Gastrocnemius medialis (tissue), 4 donors: ENCODE measurements at regions of chr7 and their contacts with region 1.

Region 1: DNA sequence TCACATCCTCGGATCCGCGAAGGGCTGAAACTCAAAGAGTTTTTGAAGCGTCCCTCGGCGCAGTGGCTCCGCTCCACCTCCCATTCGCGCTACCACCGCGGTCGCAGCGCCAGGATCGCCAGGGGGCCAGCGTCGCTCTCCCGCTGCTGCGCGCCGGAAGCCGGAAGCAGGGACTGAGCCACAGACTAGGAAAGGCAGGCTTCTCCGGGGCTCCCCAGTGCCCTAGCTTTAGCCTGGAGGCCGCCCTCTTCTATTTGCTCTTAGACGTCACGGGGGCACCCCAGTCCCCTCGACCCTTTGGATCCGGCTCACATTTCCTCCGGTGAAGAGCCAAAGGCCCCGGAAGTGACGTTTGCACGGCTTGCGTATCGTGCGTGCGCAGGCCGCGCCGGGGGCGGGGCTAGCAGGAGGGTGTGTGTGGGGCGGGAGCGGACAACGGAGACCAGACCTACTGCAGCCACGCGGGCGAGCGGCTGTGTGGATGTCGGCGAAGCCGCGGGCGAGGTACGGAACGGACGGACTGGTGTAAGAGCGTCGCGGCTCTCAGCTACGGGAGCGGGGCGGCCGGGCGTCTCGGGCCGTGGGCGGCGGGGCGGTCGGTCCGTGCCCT is 25.5 kb downstream of the KCTD7 start:
- DNase-seq: peak; percentile 95 to 97
- ATAC-seq: peak; percentile 97
- H3K4me3 ChIP-seq: peak overlapping the region; percentile 81 to 99 (median 87)
- H3K27ac ChIP-seq: peak overlapping the region; percentile 89 to 100 (median 99)
- H3K4me1 ChIP-seq: peaks cover 11 to 13% of the 10 kb centered on the region in 2 donors
- H3K27me3 ChIP-seq: no peaks in the 10 kb centered on the region
- CTCF ChIP-seq: peak in 2 of 5 experiments; percentile 3 to 32
- POLR2A ChIP-seq: peak; percentile 97 to 99

Region 2: GRCh38 chr7:66250711-66251110 is 403.5 kb before region 1 on chr7:
- in situ Hi-C with region 1: no loop called
- intact Hi-C with region 1: no loop called
- DNase-seq: no peak
- ATAC-seq: no peak
- H3K4me3 ChIP-seq: no peak overlapping the region
- H3K27ac ChIP-seq: no peak overlapping the region
- H3K4me1 ChIP-seq: no peaks in the 10 kb centered on the region
- H3K27me3 ChIP-seq: no peaks in the 10 kb centered on the region
- CTCF ChIP-seq: no peak
- POLR2A ChIP-seq: no peak

Region 3: DNA sequence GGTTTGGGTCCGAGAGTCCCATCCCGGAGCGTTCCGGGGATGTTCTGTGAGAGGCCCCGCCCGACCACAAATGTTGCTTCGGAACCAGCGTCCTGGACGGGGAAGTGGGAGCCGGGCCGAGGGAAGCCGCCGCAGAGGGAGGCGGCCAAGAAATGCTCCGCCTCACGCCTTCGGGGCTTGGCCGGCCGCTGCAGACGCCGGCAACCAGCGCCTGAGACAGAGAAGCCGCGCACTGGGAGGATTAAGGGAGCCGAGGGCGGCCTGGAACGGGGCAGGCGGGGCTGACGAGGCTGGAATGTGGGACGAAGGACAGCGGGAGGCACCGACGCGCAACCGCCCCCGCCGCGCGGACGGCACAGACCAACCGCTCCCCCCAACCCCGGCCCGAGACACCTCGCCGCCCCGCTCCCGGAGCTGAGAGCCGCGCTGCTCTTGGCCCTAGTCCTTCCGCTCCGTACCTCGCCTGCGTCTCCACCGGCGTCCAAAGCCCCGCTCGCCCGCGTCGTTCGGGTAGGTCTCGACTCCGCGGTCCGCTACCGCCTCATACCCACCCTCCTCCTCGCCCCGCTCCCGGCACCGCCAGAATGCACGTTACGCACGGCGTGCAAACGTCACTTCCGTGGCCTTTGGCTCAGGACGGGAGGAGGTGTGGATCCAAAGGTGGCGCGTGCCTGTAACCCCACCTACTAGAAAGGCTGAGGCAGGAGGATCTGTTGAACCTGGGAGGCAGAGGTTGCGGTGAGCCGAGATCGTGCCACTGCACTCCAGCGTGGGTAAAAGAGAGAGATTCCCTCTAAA is 62.2 kb before region 1 on chr7:
- in situ Hi-C with region 1: no loop called
- intact Hi-C with region 1: loop called (anchors 1 kb)
- DNase-seq: peak; percentile 88 to 92
- ATAC-seq: peak; percentile 97
- H3K4me3 ChIP-seq: peak overlapping the region; percentile 70 to 94 (median 88)
- H3K27ac ChIP-seq: peak overlapping the region; percentile 95 to 98 (median 96)
- H3K4me1 ChIP-seq: peaks cover 30 to 33% of the 10 kb centered on the region in 2 donors
- H3K27me3 ChIP-seq: no peaks in the 10 kb centered on the region
- CTCF ChIP-seq: no peak
- POLR2A ChIP-seq: peak; percentile 97 to 98

Region 4: DNA sequence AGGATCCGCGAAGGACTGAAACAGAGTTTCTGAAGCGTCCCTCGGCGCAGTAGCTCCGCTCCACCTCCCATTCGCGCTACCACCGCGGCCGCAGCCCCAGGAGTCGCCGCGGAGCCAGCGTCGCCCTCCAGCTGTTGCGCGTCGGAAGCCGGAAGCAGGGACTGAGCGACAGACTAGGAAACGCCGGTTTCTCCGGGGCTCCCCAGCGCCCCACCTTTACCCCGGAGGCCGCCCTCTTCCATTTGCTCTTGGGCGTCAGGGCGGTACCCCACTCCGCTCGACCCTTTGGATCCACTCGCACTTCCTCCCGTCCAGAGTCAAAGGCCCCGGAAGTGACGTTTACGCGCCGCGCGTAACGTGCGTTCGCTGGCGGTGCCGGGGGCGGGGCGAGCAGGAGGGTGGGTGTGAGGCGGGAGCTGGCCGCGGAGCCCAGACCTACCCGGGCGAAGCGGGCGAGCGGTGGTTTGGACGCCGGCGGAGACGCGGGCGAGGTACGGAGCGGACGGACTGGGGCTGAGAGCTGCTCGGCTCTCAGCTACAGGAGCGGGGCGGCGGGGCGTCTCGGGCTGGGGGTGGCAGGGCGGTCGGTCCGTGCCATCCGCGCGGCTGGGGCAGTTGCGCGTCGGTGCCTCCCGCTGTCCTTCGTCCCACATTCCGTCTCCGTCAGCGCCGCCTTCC is 86.2 kb after region 1 on chr7 and contains the start of gene RABGEF1:
- in situ Hi-C with region 1: no loop called
- intact Hi-C with region 1: loop called (anchors 2 kb)
- DNase-seq: peak; percentile 95 to 96
- ATAC-seq: peak; percentile 91 to 92
- H3K4me3 ChIP-seq: peak within 1 kb of the TSS; percentile 82 to 100 (median 98)
- H3K27ac ChIP-seq: peak within 1 kb of the TSS; percentile 97 to 99 (median 98)
- H3K4me1 ChIP-seq: peaks cover 15 to 16% of the 10 kb centered on the region in 2 donors
- H3K27me3 ChIP-seq: no peaks in the 10 kb centered on the region
- CTCF ChIP-seq: peak in 1 of 5 experiments; percentile 16
- POLR2A ChIP-seq: peak; percentile 91 to 96
- total RNA-seq, gene RABGEF1: 18.8 to 29.7 (median 24.9) TPM

Region 5: DNA sequence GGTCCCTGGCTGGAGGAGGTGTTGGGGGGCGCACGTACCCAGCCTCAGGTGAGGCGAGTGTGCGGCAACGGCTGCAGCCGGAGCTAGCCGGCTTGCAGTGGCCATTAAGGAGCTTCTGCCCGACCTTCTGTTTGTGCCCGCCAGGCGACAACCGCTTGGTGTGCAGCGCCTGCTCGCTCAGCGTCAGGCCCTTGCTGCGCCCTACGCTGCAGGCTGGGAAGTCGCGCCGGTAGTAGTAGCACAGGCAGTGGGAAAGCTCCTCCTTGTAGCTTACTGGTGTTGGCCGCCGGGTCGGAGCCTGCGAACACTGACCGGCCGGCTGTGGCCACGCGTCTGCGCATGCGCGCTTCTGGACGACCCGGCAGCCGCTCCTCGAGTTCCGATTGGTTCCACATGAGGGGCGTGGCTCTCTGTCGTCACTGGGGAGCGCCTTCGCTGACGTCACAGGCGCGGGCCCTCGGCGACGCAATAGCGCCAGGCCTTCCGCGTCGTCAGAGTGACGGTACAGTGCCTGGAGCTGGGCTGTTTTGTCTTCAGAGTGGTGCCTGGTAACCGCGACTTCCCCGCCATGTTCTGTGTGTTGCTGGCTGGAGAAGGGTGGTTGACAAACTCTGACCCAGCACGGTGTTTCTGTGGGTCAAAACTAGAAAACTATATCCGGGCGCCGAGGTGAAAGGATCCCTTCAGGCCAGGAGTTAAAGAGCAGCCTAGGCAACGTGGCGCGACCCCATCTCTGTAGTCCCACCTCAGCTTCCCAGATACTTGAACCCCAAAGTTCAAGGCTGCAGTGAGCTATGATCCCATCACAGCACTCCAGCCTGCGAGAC is 190.5 kb after region 1 on chr7:
- in situ Hi-C with region 1: no loop called
- intact Hi-C with region 1: loop called (anchors 1 kb)
- DNase-seq: peak; percentile 95 to 98
- ATAC-seq: peak; percentile 95 to 98
- H3K4me3 ChIP-seq: peak overlapping the region; percentile 68 to 98 (median 86)
- H3K27ac ChIP-seq: peak overlapping the region; percentile 91 to 99 (median 97)
- H3K4me1 ChIP-seq: peaks cover 9 to 22% of the 10 kb centered on the region in 2 donors
- H3K27me3 ChIP-seq: no peaks in the 10 kb centered on the region
- CTCF ChIP-seq: peak; percentile 31 to 49 (median 38)
- POLR2A ChIP-seq: peak; percentile 87 to 91